Thyroid gland (tissue), 4 donors: ENCODE measurements at regions of chr1 and their contacts with region 1.

Region 1: DNA sequence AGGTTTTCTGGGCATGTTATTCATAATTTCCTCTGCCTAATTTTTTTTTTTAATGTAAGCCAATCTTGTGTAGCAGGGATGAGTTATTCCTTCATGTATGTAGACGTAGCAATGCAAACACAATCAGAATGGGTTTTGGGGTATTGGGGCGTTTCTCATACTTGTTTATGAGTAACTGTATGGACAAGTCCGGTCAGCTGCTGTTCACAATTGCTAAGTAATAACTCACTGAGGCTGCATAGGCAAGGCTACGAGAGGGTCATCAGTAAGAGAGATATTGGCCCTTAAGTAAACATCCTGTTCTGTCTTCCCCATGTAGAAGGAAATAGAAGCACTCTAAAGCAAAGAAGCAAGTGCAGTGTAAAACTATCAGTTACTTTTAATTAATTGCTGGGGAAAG is 9.5 kb upstream of the TARS2 start:
- DNase-seq: no peak
- H3K4me3 ChIP-seq: no peak overlapping the region
- H3K27ac ChIP-seq: no peak overlapping the region
- H3K4me1 ChIP-seq: peaks cover 5 to 6% of the 10 kb centered on the region in 2 donors
- H3K27me3 ChIP-seq: no peaks in the 10 kb centered on the region
- CTCF ChIP-seq: no peak
- POLR2A ChIP-seq: no peak

Region 2: DNA sequence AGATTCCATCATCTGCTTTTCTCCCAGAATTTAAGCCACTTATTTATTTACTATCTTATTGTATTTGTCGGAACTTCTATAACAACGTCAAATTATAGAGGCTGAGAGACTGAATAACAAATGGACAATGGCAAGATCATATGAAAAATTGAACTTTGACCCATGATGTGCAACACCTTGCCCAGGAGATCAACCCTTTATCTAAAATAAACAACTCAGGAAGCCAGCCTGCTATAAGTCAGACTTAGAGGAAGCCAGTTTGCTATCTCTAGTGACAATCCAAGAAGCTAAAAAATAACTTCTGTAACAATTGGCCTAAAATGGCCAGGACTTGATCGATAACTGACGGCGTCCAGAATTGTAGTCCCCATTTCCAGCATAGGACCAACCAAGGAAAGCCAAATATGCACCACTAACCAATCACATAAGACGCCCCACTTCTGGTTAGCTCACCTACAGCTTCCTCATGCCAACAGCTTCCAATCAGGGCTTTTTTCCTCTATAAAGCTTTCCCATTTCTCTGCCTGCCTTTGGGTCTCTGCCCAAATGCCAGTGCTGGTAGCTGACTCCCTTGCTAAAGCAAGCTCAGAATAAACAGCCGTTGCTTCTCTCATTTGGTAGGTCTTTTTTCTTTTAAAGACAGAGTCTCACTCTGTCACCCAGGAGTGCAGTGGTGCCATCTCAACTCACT is 270.3 kb before region 1 on chr1:
- intact Hi-C with region 1: no loop called
- DNase-seq: no peak
- H3K4me3 ChIP-seq: no peak overlapping the region
- H3K27ac ChIP-seq: no peak overlapping the region
- H3K4me1 ChIP-seq: no peaks in the 10 kb centered on the region
- H3K27me3 ChIP-seq: no peaks in the 10 kb centered on the region
- CTCF ChIP-seq: no peak
- POLR2A ChIP-seq: no peak

Region 3: GRCh38 chr1:150649441-150650075 is 171.8 kb after region 1 on chr1:
- intact Hi-C with region 1: loop called (anchors 10 kb)
- DNase-seq: peak; percentile 69 to 74
- H3K4me3 ChIP-seq: no peak overlapping the region
- H3K27ac ChIP-seq: peak overlapping the region; percentile 37 to 62 (median 42)
- H3K4me1 ChIP-seq: peaks cover 8 to 25% of the 10 kb centered on the region in 2 donors
- H3K27me3 ChIP-seq: no peaks in the 10 kb centered on the region
- CTCF ChIP-seq: no peak
- POLR2A ChIP-seq: no peak